ENCODE measurements at regions of chr10 and their contacts with region 1.

Region 1: GRCh38 chr10:77111611-77112550 is 525.7 kb downstream of the KCNMA1 start:
- DNase-seq: no peak
- ATAC-seq: peak; percentile 83
- H3K4me3 ChIP-seq: no peak overlapping the region
- H3K27ac ChIP-seq: peak overlapping the region; percentile 5 to 66
- H3K4me1 ChIP-seq: peaks cover 0 to 2% of the 10 kb centered on the region in 2 donors
- H3K27me3 ChIP-seq: no peaks in the 10 kb centered on the region

Region 2: GRCh38 chr10:76558586-76558985 is 553.3 kb before region 1 on chr10:
- intact Hi-C with region 1: loop called in 1 of 2 experiments (anchors 10 kb)
- DNase-seq: no peak
- ATAC-seq: no peak
- H3K4me3 ChIP-seq: no peak overlapping the region
- H3K27ac ChIP-seq: peak overlapping the region in 1 of 2 donors; percentile 68
- H3K4me1 ChIP-seq: peaks cover 0 to 7% of the 10 kb centered on the region in 2 donors
- H3K27me3 ChIP-seq: no peaks in the 10 kb centered on the region

Region 3: GRCh38 chr10:76675951-76676587 is 435.8 kb before region 1 on chr10:
- intact Hi-C with region 1: loop called in 1 of 2 experiments (anchors 5 kb)
- DNase-seq: peak; percentile 88 to 92
- ATAC-seq: peak; percentile 94
- H3K4me3 ChIP-seq: no peak overlapping the region
- H3K27ac ChIP-seq: peak overlapping the region; percentile 68 to 100
- H3K4me1 ChIP-seq: peaks cover 4 to 6% of the 10 kb centered on the region in 2 donors
- H3K27me3 ChIP-seq: no peaks in the 10 kb centered on the region

Region 4: GRCh38 chr10:77011874-77012811 is 99.7 kb before region 1 on chr10:
- intact Hi-C with region 1: loop called in 1 of 2 experiments (anchors 5 kb)
- DNase-seq: no peak
- ATAC-seq: peak; percentile 86
- H3K4me3 ChIP-seq: no peak overlapping the region
- H3K27ac ChIP-seq: peak overlapping the region; percentile 72 to 77
- H3K4me1 ChIP-seq: peaks cover 2 to 11% of the 10 kb centered on the region in 2 donors
- H3K27me3 ChIP-seq: no peaks in the 10 kb centered on the region

Measured in aorta (tissue), 5 donors.